HEK293 (cell line): ENCODE measurements at regions of chr19 and their contacts with region 1.

Region 1: DNA sequence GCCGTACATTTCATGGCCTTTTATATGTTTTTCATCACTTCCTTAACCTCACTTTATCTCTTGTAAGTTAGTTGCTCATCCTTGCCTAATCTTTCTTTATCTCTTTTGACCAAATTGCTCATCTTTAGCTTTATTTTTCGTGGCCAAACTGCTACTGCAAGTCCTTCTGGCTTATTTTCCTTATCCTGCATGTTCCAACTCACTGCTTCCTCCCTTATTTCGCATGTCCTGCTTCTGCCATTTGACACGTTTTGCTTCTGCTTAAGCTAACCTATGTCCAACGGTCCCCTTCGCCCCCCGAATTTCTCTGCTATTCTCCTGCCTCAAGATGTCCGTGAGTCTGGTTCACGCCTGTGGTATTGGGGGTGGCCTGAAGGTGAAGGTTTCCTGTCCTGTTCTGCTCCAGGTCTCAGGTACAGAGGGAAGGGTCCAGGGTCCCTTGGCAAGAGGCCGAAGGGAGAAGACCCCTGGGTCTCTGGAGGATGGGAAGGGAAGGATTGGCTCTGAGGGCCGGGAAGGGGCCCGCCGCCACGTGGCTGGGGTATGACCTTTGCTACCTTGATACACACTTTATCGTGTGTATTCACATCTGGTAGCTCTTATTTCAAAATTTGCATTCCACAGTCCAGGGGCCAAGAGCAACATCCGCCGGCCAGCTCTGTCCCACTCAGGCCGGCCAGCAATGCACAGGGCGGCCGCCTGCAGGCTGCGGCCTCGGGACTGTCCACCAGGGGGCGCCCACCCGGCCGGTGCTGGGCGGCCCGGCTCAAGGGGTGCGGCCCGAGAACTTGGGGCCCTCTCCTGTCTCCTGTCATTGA is 2.9 kb upstream of the C19orf85 start:
- H3K4me3 ChIP-seq: no peak overlapping the region
- H3K27ac ChIP-seq: no peak overlapping the region
- H3K4me1 ChIP-seq: no peaks in the 10 kb centered on the region
- CTCF ChIP-seq: peak; percentile 91

Region 2: DNA sequence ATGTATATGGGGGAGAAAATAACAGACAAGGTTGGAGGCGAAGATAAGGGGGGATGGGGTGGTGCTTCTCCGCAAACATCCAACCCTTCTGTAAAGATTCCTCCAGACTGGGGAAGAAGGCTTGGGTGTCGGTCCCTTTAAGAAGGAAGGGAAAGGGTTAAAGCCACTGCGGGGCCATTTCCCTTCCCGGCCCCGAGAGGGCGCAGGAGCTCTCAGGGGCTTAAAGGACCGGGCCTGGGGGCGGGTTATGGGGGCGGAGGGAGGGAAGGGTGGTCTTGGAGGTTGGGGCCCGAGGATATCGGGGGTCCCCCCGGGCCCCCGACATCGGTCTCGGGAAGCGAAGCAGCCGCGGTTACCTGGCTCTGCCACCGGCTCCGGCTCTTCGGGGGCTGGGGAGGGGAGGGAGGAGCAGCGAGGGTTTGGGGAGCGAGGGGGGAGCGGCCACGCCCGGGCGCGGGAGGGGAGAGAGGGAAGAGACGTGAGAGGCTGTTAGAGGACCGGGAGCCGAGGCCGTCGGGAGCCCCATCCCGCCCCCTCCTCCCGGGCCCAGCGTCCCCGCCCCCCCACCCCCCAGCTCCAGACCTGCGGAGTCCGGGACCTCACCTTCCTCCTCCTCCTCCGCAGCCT is 321.3 kb before region 1 on chr19:
- CTCF ChIA-PET with region 1: interaction called, 14 read pairs
- POLR2A ChIA-PET with region 1: no interaction called
- H3K4me3 ChIP-seq: peak overlapping the region; percentile 46
- H3K27ac ChIP-seq: no peak overlapping the region
- H3K4me1 ChIP-seq: no peaks in the 10 kb centered on the region
- CTCF ChIP-seq: peak; percentile 61; the same call in 1 of the 2 replicates

Region 3: DNA sequence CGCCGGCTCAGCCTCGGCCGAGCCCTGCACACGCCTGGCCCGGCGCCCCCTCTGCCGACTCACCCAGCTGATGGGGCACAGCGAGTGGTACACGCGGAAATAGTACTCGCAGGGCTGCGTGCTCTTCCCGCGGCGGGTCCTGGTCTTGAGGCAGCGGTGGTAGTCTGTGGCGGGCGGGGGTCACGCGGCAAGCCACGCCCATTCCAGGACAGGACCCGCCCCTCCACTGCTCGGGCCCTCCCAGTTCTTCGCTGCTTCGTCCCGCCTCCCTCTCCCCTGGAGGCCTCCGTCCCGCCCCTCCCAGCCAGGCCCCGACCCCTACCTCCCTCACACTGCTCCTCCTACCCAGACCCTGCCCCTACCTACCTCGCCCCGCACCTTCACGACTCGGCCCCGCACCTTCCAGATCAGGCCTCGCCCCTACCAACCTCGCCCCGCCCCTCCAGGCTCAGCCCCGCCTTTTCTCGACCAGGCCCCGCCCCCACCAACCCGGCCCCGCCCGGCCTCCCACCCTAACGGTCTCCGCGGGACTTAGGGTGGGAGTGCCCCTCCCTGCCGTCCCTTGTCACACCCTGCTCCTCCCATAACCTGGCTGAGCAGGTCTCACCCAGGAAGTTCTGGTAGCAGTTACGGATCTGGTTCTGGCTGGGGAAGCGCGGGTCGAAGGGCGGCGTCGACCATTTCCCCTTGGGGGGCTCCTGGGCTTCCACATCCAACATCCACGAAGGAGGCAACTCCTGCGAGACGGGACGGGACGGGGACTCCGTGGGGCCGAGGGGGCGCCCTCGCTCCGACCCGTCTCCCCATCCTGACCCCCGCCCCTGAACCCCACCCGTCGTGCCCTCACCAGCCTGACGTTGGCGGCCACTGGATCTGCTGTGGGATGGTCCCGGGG is 113.4 kb before region 1 on chr19:
- CTCF ChIA-PET with region 1: no interaction called
- POLR2A ChIA-PET with region 1: no interaction called
- H3K4me3 ChIP-seq: peak overlapping the region; percentile 54
- H3K27ac ChIP-seq: no peak overlapping the region
- H3K4me1 ChIP-seq: peaks cover 8% of the 10 kb centered on the region; the same call in 1 of the 2 replicates
- CTCF ChIP-seq: no peak

Region 4: DNA sequence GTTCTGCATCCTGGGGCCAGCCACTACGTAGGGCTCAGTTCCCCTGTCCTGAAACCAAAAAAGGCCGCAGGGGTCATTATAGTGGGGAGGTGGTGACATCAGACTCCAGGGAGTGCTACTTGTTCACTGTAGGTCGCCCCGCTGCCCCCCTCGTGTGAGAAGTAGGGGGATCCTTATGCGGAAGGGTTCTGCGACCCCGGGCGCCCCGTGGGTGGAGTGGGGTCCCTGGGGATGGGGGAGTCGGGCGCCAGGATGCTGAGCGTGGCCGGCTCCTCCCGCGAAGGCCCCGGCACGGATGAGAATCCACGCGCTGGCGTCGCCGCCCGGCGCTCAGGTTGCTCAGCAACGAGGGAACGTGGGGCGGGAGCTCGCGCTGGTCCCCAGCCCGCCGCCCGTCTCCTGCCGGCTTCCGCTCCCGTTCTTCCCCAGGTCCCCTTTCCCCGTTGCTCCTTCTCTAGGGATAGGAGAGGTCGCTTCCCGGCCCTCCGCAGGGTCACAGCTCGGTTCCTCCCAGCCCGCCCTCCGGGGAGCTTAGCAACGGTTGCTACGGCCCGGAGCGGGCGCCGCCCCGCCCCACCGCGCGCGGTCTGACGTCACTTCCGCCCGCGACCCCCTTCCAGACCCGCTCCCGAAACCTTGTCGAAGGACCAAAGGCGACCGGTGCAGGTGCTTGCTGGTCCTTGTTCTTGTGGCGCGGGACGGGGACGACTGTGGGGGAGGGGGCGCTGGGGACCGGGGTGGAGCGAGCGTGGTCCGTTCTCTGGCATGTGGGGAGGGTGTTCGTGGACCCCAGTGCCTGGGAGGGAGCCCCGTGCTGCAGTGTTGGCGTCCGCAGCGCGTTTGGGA is 17.4 kb after region 1 on chr19 and contains the start of gene NAT14:
- CTCF ChIA-PET with region 1: interaction called, 85 read pairs
- POLR2A ChIA-PET with region 1: no interaction called
- H3K4me3 ChIP-seq: peak within 1 kb of the TSS; percentile 91
- H3K27ac ChIP-seq: peak within 1 kb of the TSS; percentile 59; the same call in 1 of the 2 replicates
- H3K4me1 ChIP-seq: peaks cover 23% of the 10 kb centered on the region
- CTCF ChIP-seq: no peak

Region 5: DNA sequence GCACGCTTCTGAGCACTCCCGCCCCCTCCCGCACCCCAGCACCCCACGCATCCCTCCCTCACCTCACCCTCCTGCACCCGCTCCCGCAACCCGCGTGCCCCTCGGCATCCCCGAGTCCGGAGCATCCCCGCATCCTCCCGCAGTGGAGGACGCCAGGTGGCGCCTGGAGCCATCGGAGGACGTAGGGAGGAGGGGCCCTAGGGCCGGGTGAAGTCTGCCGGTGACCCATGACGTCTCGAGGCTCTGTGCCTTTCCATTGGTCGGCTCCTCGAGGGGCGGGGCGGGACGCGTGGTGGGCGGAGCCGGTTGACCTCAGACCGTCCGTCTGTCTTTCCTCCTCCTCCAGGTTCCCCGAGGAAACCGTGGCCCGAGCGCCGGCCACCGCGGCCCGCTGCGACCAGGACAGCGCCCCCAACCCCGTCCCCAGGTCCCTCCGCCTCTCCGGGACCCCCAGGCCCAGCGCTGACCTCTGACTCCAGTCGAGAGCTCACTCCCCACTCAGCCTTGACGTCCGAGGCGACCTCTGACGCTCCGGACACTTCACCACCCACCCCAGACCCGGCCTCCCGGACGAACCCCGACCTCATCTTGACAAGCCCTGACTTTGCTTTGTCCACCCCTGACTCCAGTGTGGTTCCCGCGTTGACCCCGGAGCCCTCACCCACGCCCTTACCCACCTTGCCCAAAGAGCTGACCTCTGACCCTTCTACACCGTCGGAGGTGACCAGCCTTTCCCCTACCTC is 49.6 kb after region 1 on chr19:
- CTCF ChIA-PET with region 1: interaction called, 152 read pairs
- POLR2A ChIA-PET with region 1: no interaction called
- H3K4me3 ChIP-seq: peak overlapping the region; percentile 37
- H3K27ac ChIP-seq: no peak overlapping the region
- H3K4me1 ChIP-seq: no peaks in the 10 kb centered on the region
- CTCF ChIP-seq: peak; percentile 97

Region 6: DNA sequence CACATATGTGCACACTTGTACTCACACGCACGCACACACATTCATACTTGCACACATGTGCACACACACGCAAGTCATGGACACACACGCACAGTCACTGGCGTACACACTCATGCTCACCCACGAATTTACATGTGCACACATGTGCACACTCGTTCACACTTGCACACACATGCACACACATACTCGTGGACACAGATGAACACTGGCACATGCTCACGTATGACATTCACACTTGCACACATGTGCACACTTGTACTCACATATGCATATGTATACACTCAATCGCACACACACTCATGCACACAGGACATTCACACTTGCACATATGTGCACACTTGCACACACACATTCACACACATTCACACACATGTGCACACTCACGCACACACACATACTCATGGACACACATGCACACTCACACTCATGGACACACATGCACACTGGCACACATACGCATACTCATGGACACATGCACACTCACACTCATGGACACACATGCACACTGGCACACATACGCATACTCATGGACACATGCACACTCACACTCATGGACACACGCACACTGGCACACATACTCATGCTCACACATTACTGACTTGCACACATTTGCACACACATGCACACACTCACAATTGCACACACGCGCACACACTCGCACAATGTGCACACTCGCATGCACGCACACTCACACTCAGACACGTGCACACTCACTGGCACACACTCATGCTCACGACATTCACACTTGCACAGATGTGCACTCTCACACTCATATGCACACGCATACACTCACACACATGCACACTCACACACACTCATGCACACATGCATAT is 60.0 kb after region 1 on chr19:
- CTCF ChIA-PET with region 1: no interaction called
- POLR2A ChIA-PET with region 1: no interaction called
- H3K4me3 ChIP-seq: no peak overlapping the region
- H3K27ac ChIP-seq: no peak overlapping the region
- H3K4me1 ChIP-seq: no peaks in the 10 kb centered on the region
- CTCF ChIP-seq: no peak

Region 7: DNA sequence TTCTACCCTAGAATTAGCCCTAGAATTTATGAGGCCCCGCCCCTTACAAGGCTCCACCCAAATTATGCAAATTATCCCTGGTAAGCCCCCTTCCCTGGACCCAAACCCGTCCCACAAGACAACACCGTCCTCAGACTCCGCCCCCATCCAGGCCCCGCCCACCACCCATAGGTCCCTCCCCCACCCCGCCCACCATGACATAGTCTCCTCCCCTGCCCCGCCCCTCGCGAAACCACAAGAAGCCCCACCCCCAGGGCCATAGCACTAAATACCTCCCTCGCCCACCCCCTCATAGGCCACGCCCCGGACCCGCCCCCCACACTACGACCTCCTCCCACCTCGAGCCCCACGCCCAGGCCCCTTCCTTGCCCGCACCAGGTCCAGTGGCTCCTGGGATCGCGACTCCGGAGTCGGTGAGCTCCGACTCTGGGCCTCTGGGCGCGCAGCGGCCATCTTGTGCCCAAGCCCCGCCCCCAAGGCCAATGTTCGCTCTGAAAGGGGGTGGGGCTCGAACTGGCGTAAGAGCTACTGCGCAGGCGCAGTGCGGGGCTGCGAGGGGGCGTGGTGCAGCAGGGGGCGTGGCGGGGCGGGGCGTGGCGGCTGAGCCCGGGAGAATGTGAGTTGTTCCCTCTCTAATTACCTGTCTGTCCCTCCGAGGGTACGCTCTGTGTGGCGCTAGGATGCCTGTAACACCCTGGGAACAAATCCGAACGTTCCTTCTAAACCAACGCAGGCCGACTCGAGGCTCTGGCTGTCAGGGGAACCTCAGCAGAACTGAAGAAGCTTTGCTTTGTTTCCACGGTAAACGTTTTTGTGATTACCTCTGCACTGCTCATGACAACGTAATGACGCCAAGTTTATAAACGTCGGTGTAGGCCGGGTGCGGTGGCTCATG is 156.9 kb after region 1 on chr19 and contains the start of gene ZNF784:
- CTCF ChIA-PET with region 1: interaction called, 25 read pairs
- POLR2A ChIA-PET with region 1: no interaction called
- H3K4me3 ChIP-seq: peak within 1 kb of the TSS; percentile 88
- H3K27ac ChIP-seq: peak within 1 kb of the TSS; percentile 87
- H3K4me1 ChIP-seq: peaks cover 5% of the 10 kb centered on the region
- CTCF ChIP-seq: no peak